Endothelial cell of umbilical vein (primary cell): ENCODE measurements at regions of chr7 and their contacts with region 1.

Region 1: GRCh38 chr7:143499246-143499645 is 21.6 kb downstream of the TAS2R41 start:
- DNase-seq: peak; percentile 97
- H3K4me3 ChIP-seq: peak overlapping the region in 1 of 3 experiments; percentile 31
- H3K27ac ChIP-seq: peak overlapping the region; percentile 99
- H3K4me1 ChIP-seq: peaks cover 51% of the 10 kb centered on the region
- H3K27me3 ChIP-seq: no peaks in the 10 kb centered on the region
- CTCF ChIP-seq: no peak
- POLR2A ChIP-seq: peak; percentile 61

Region 2: DNA sequence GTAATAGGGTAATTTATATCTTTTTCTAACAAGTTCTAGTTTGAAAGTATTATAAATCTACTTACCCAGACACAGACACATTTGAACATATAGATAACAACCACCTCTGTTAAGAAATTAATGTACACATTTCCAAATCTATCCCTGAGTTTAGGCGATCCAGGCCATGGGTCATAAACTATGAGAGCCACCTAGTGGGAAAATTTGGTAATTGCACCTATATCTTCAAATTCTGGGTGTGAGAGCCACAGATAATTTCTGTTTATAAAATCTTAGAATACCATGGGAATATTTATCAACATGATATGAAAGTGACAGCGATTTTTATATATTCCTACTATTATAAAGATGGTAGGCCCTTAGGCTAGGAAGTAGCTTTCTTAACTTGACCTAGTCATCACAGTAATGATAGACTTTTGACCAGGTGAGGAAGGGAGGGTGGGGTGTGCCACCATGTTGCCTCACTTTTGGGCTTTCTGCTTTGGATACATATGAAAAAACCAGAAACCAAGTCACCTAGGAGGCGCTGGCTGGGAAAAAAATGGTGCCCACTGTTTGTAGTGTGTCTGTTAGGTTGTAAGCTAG is 82.6 kb before region 1 on chr7:
- CTCF ChIA-PET with region 1: interaction called, 17 read pairs
- POLR2A ChIA-PET with region 1: no interaction called
- dilution Hi-C with region 1: no loop called
- intact Hi-C with region 1: loop called (anchors 1 kb)
- DNase-seq: peak; percentile 56
- H3K4me3 ChIP-seq: no peak overlapping the region
- H3K27ac ChIP-seq: no peak overlapping the region
- H3K4me1 ChIP-seq: peaks cover 9% of the 10 kb centered on the region
- H3K27me3 ChIP-seq: no peaks in the 10 kb centered on the region
- CTCF ChIP-seq: peak; percentile 41 to 59
- POLR2A ChIP-seq: no peak

Region 3: GRCh38 chr7:143432201-143432600 is 67.0 kb before region 1 on chr7:
- CTCF ChIA-PET with region 1: no interaction called
- POLR2A ChIA-PET with region 1: no interaction called
- dilution Hi-C with region 1: no loop called
- intact Hi-C with region 1: loop called (anchors 2 kb)
- DNase-seq: no peak
- H3K4me3 ChIP-seq: no peak overlapping the region
- H3K27ac ChIP-seq: no peak overlapping the region
- H3K4me1 ChIP-seq: peaks cover 33% of the 10 kb centered on the region
- H3K27me3 ChIP-seq: no peaks in the 10 kb centered on the region
- CTCF ChIP-seq: no peak
- POLR2A ChIP-seq: no peak